SK-N-SH (cell line): ENCODE measurements at regions of chr12 and their contacts with region 1.

Region 1: GRCh38 chr12:57904848-57905811 is 36.2 kb upstream of the ATP23 start:
- DNase-seq: peak; percentile 81
- H3K4me3 ChIP-seq: peak overlapping the region in 1 of 2 experiments; percentile 22; a peak in 1 of 4 replicates
- H3K27ac ChIP-seq: no peak overlapping the region
- H3K4me1 ChIP-seq: peaks cover 0 to 3% of the 10 kb centered on the region in 2 experiments; a peak in 1 of 4 replicates
- H3K27me3 ChIP-seq: no peaks in the 10 kb centered on the region; the same call in 1 of the 2 replicates
- CTCF ChIP-seq: peak; percentile 100
- EP300 ChIP-seq: no peak; a peak in 1 of 4 replicates
- RAD21 ChIP-seq: peak; percentile 100

Region 2: GRCh38 chr12:57631893-57632693 is 273.0 kb before region 1 on chr12:
- CTCF ChIA-PET with region 1: no interaction called
- POLR2A ChIA-PET with region 1: no interaction called
- DNase-seq: peak; percentile 77
- H3K4me3 ChIP-seq: peak overlapping the region; percentile 55 to 85
- H3K27ac ChIP-seq: no peak overlapping the region
- H3K4me1 ChIP-seq: peaks cover 0 to 2% of the 10 kb centered on the region in 2 experiments; a peak in 1 of 4 replicates
- H3K27me3 ChIP-seq: no peaks in the 10 kb centered on the region
- CTCF ChIP-seq: no peak
- EP300 ChIP-seq: no peak
- RAD21 ChIP-seq: no peak

Region 3: DNA sequence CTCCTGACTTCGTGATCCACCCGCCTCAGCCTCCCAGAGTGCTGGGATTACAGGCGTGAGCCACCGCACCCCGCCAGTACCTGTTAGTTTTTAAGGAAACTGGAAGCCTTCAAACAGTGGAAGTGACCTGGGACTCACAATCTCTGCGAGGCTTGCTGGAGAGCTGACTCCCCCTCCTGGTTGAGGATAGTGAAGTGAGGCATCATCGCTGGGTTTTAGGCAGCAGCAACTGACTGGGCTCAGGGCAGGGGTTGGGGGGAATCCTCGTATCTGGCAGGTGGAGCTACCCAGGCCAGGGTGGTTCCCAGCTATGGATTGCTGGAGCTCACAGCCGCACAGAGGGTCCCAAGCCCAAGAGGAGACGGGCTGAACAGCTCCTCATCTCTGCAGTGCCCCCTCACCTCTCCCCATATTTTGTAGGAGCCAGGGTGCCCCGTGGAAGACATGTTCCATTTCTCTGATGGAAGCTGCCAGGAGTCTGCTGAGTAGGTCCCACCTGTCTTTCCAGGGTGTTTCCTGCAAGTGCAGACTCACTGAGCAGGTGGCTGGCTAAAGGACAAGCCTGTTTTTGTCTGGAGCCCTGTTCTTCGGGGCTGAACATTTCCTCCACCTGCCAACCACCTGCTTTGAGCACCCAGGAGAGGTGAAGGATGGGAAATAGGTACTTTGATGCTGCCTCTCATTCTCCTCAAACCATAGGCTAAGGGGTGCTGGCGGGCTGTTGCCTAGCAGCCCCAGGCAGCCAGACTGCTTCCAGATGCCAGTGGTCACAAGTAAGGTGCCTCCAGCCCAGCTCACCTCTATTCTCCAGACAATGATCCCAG is 89.7 kb before region 1 on chr12:
- CTCF ChIA-PET with region 1: interaction called, 14 read pairs
- POLR2A ChIA-PET with region 1: no interaction called
- DNase-seq: peak; percentile 33
- H3K4me3 ChIP-seq: no peak overlapping the region
- H3K27ac ChIP-seq: peak overlapping the region in 1 of 2 experiments; percentile 11; a peak in 1 of 4 replicates
- H3K4me1 ChIP-seq: peaks cover 0 to 20% of the 10 kb centered on the region in 2 experiments; a peak in 2 of 4 replicates
- H3K27me3 ChIP-seq: no peaks in the 10 kb centered on the region
- CTCF ChIP-seq: no peak
- EP300 ChIP-seq: no peak
- RAD21 ChIP-seq: peak; percentile 44

Region 4: GRCh38 chr12:57829025-57829777 is 75.9 kb before region 1 on chr12:
- CTCF ChIA-PET with region 1: interaction called, 146 read pairs
- POLR2A ChIA-PET with region 1: interaction called, 3 read pairs
- DNase-seq: no peak
- H3K4me3 ChIP-seq: no peak overlapping the region
- H3K27ac ChIP-seq: no peak overlapping the region
- H3K4me1 ChIP-seq: peaks cover 14 to 25% of the 10 kb centered on the region in 2 experiments; a peak in 3 of 4 replicates
- H3K27me3 ChIP-seq: no peaks in the 10 kb centered on the region
- CTCF ChIP-seq: no peak
- EP300 ChIP-seq: no peak
- RAD21 ChIP-seq: no peak

Region 5: DNA sequence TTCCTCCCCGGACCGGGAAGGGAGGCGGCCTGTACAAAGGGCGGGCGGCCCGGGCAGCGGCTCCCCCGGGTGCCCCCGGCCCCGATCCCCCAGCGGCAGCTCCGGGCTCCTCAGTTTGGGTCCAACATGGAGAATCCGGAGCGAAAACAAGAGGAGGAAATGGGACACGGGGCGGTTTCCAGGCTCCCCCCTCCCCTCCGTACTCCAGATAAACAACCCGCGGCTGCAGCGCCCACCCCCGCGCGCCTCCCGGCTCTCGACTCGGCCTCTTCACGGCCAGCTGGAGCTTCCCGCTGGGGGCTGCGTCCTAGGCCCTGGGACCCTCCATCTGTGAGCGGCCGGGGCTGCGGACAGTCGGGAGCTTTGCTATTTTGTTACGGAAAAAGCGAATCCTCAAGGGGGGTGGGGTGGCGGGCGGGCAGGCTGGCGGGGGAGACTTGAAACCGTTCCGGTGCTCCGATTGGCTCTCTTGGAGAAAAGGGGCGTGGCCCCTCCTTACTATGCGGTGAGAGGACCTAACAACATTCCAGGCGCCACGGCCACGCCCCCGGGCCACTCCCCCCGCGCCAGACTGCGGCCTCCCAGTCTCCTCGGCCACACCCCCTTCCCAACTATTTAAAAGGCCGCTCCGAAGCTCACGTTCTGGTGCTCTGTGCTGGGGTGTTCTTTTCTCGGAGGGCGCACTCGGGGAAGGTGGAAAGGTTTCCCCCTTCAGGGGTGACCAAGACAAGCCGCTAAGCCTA is 58.4 kb before region 1 on chr12 and contains the start of gene CTDSP2:
- CTCF ChIA-PET with region 1: interaction called, 67 read pairs
- POLR2A ChIA-PET with region 1: no interaction called
- DNase-seq: peak; percentile 99
- H3K4me3 ChIP-seq: peak within 1 kb of the TSS; percentile 88 to 99
- H3K27ac ChIP-seq: peak within 1 kb of the TSS; percentile 94 to 99
- H3K4me1 ChIP-seq: peaks cover 24 to 29% of the 10 kb centered on the region in 2 experiments; a peak in 3 of 4 replicates
- H3K27me3 ChIP-seq: no peaks in the 10 kb centered on the region
- CTCF ChIP-seq: no peak
- EP300 ChIP-seq: no peak
- RAD21 ChIP-seq: no peak
- polyA plus RNA-seq, gene CTDSP2: 117 and 119 TPM in 2 replicates

Region 6: DNA sequence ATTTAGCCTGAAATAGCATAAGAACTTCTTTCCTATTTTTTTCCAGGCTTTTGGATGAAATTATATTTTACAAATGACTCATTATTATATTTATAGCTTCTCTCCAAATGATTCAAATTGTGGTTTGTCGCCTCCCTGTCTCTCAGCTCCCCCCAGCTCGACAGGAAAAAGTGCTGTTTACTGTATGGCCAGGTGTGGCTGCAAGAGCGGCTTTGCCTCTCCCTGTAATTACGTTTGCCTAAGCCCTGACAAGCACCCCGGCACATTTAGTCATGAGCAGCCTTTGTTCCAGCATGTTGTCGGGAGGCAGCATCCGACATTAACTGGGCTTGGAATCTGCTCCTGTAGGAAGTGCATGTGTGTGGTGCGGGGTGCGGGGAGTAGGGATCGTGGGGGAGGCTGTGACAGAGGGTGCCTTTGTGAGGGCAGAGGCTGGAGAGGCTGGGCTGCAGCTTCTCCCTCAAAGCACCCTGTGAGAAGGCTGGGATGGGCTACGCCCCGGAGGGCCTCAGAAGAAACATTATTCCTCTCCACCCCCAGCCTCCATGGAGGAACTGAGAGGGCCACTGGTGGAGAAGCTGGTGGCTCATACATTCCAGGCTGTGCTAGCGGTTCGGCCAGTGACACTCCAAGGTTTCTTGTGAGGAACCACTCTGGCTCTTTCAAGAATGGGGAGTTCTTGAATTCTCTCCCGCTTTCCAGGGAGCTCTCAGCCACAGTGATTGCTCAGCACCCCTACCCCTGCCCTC is 16.5 kb before region 1 on chr12:
- CTCF ChIA-PET with region 1: interaction called, 12 read pairs
- POLR2A ChIA-PET with region 1: no interaction called
- DNase-seq: no peak
- H3K4me3 ChIP-seq: peak overlapping the region; percentile 6 to 54; a peak in 3 of 4 replicates
- H3K27ac ChIP-seq: peak overlapping the region; percentile 91 to 93
- H3K4me1 ChIP-seq: peaks cover 52 to 53% of the 10 kb centered on the region in 2 experiments
- H3K27me3 ChIP-seq: no peaks in the 10 kb centered on the region
- CTCF ChIP-seq: no peak
- EP300 ChIP-seq: peak; percentile 4 to 32; a peak in 1 of 4 replicates
- RAD21 ChIP-seq: no peak

Region 7: GRCh38 chr12:58233886-58234285 is 328.8 kb after region 1 on chr12:
- CTCF ChIA-PET with region 1: no interaction called
- POLR2A ChIA-PET with region 1: no interaction called
- DNase-seq: no peak
- H3K4me3 ChIP-seq: no peak overlapping the region
- H3K27ac ChIP-seq: no peak overlapping the region
- H3K4me1 ChIP-seq: no peaks in the 10 kb centered on the region
- H3K27me3 ChIP-seq: no peaks in the 10 kb centered on the region; the same call in none of the 2 replicates
- CTCF ChIP-seq: no peak
- EP300 ChIP-seq: no peak
- RAD21 ChIP-seq: no peak